ENCODE measurements at regions of chr17 and their contacts with region 1.

Region 1: DNA sequence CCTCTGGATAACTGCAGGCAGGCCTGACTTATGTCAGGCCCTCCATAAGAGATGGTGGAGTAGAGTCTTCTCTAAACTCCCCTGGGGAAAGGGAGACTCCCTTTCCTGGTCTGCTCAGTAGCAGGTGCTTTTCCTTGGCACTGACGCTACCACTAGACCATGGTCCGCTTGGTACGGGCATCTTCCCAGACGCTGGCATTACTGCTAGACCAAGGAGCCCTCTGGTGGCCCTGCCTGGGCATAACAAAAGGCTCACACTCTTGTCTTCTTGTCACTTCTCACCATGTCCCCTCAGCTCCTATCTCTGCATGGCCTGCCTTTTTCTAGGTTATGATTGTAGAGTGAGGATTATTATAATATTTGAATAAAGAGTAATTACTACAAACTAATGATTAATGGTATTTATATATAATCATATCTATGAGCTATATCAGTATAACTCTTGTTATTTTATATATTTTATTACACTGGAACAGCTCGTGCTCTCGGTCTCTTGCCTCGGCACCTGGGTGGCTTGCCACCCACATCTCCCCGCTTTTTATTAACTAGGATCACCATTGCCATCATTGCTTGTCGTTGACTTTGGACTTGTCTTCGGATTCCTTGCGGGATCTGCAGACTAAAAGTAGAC is 59.8 kb upstream of the ARL4D start:
- DNase-seq: peak; percentile 69
- H3K4me3 Mint-ChIP-seq: no peak overlapping the region
- H3K27ac Mint-ChIP-seq: no peak overlapping the region
- H3K4me1 Mint-ChIP-seq: peaks cover 17% of the 10 kb centered on the region
- H3K27me3 Mint-ChIP-seq: no peaks in the 10 kb centered on the region
- CTCF ChIP-seq: peak; percentile 65

Region 2: DNA sequence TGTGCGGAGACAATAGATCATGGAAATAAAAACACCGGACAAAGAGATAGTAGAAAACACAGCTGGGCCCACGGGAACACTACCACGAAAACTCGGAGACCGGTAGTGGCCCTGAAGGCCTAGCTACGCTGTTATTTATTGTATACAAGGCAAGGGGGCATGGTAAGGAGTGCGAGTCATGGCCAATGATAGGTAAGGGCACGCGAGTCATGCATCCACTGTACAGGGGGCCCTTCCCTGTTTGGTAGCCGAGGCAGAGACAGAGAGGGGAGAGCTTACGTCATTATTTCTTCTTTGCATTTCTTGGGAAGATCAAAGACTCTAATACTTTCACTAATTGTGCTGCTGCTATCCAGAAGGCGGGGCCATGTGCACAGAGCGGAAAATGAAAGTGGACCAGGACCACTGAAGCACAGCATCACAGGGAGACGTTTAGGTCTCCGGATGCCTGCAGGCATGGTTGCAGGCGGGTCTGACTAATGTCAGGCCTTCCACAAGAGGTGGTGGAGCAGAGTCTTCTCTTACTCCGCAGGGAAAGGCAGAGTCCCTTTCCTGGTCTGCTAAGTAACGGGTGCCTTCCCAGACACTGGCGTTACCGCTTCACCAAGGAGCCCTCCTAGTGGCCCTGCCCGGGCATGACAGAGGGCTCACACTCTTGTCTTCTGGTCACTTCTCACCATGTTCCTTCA is 14.7 kb before region 1 on chr17:
- CTCF ChIA-PET with region 1: interaction called, 10 read pairs
- POLR2A ChIA-PET with region 1: interaction called, 8 read pairs
- intact Hi-C with region 1: no loop called
- DNase-seq: no peak
- H3K4me3 Mint-ChIP-seq: no peak overlapping the region
- H3K27ac Mint-ChIP-seq: no peak overlapping the region
- H3K4me1 Mint-ChIP-seq: peaks cover 12% of the 10 kb centered on the region
- H3K27me3 Mint-ChIP-seq: no peaks in the 10 kb centered on the region
- CTCF ChIP-seq: no peak